CD4-positive, alpha-beta T cell (primary cell): ENCODE measurements at regions of chr16 and their contacts with region 1.

Region 1: GRCh38 chr16:48318630-48319029 is 66.6 kb downstream of the SIAH1 start:
- DNase-seq: peak in 12 of 14 experiments; percentile 4 to 82 (median 28)
- ATAC-seq: peak; percentile 96
- H3K4me3 ChIP-seq: peak overlapping the region; percentile 28
- H3K4me3 Mint-ChIP-seq: peak overlapping the region; percentile 77
- H3K27ac ChIP-seq: peak overlapping the region in 1 of 2 donors; percentile 41
- H3K27ac Mint-ChIP-seq: peak overlapping the region; percentile 89
- H3K4me1 ChIP-seq: peaks cover 24% of the 10 kb centered on the region
- H3K4me1 Mint-ChIP-seq: peaks cover 70% of the 10 kb centered on the region
- H3K27me3 ChIP-seq: no peaks in the 10 kb centered on the region
- H3K27me3 Mint-ChIP-seq: no peaks in the 10 kb centered on the region
- CTCF ChIP-seq: no peak

Region 2: DNA sequence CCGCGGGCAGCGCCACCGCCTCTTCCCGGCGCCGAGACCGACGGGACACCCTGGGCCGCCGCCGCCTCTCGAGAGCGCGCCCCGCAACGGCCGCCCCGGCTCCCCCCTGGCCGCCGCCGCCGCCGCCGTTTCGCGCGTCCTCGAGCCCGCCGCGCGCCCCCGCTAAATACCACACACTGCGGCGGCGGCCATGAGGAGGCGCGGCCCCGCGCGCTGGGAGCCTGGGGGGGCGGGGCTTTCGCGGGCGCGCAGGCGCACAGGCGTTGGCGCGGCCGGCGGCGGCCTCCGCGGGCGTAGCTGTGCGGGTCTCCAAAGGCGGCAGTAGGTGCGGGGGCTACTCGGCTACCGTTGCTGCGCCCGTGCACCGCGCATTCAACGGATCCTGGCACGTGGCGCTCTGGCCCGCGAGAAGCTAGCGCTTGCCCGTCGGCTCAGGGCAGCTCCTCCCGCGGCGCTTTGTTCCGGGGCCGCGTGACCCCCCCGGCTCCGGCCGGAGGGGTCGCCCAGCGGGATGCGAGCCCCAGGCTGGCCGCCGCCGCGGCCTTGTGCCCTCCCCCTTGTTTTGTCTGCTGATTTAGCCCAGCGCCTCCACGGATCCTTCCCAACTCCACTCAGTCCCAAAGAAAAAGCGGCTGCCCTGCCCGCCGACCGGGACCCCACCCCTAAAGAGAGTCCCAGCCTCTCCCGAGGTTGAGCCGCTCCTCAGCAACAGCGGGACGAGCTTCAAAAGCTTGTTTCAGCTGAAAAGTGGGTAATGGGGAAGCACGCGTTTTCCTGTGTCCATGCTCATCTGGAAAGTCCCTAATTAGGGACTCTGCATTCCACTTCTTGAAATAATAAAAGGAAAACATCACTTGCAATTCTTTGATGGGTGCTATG is 66.9 kb after region 1 on chr16 and contains the start of gene SIAH1:
- CTCF ChIA-PET with region 1: no interaction called
- POLR2A ChIA-PET with region 1: interaction called, 8 read pairs
- intact Hi-C with region 1: loop called in 1 of 2 experiments (anchors 5 kb)
- DNase-seq: peak; percentile 73 to 96 (median 86)
- ATAC-seq: peak; percentile 80
- H3K4me3 ChIP-seq: peak within 1 kb of the TSS; percentile 81
- H3K4me3 Mint-ChIP-seq: peak within 1 kb of the TSS; percentile 98
- H3K27ac ChIP-seq: peak within 1 kb of the TSS in 1 of 2 donors; percentile 46
- H3K27ac Mint-ChIP-seq: peak within 1 kb of the TSS; percentile 92
- H3K4me1 ChIP-seq: peaks cover 12% of the 10 kb centered on the region
- H3K4me1 Mint-ChIP-seq: peaks cover 27% of the 10 kb centered on the region
- H3K27me3 ChIP-seq: no peaks in the 10 kb centered on the region
- H3K27me3 Mint-ChIP-seq: no peaks in the 10 kb centered on the region
- CTCF ChIP-seq: no peak
- total RNA-seq, gene SIAH1: 40.9 to 43.0 TPM